ENCODE measurements at regions of chr9 and their contacts with region 1.

Region 1: DNA sequence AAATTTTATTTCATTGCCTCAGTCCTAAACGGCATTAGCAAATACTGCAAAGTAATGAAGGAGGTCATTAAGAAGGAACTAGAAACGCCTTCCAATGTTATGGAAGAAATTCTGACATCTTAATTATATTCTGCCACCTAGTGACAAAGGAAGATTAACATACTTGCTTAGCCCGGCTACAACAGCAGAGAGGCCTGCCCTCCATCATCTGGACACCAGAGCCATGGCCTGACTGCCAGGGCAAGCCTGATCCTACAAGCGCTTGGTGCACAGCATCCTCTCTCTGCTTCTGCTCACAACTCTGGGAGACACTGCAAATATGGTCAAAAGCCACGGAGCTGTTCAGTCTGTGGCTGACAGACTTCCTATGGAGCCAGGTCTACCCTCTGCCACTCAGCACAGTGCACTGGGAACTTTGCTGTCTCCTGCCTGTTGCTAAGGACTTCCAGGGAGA is 87.3 kb upstream of the SLC44A1 start:
- DNase-seq: peak; percentile 31 to 88
- H3K4me3 ChIP-seq: no peak overlapping the region
- CTCF ChIP-seq: no peak
- POLR2A ChIP-seq: no peak

Region 2: GRCh38 chr9:104863180-104863883 is 293.8 kb before region 1 on chr9:
- intact Hi-C with region 1: loop called (anchors 10 kb)
- DNase-seq: no peak
- H3K4me3 ChIP-seq: no peak overlapping the region
- CTCF ChIP-seq: no peak
- POLR2A ChIP-seq: no peak

Region 3: GRCh38 chr9:104927912-104928740 is 229.0 kb before region 1 on chr9 and contains the start of gene ABCA1:
- intact Hi-C with region 1: loop called (anchors 5 kb)
- DNase-seq: peak; percentile 96 to 99
- H3K4me3 ChIP-seq: peak within 1 kb of the TSS; percentile 95
- CTCF ChIP-seq: no peak
- POLR2A ChIP-seq: peak in 1 of 2 donors; percentile 75
- total RNA-seq, gene ABCA1: 35.6 to 60.7 (median 39.8) TPM

Region 4: DNA sequence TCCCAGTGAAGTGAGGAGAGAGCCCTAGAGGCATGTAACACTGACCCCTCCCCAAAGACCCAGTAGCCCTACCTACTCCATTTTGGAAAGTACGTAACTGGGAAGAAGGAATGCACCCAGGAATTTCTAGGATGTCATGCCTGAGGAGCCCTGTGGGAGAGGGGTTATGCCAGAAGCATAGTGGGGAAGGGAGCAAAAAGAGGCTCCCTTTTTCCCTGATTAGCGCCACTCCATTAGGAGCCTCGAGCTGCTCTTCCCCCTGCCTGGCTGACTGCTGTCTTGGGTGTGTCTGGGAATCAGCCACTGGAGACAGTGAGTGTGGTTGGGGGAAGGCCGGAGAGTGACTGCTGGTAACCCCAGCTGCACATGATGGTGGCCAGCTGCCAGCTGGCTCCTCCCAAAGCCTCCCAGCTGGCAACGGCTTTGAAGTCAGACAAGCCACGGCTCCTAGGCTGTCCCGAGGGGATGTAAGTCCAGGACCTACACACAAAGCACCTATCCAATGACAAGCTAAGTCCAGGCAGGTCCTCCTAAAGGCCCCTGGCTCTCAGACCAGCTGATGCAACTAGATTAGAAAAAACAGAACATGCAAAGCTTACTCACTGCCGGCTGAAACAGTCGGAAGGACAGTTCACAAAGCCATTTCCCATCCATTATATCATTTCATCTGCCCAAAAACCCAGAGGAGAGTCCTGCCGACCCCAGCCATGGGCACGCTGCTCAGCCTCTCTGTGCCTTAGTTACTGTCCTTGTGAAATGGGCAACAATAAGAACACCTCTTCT is 92.7 kb before region 1 on chr9:
- intact Hi-C with region 1: loop called (anchors 10 kb)
- DNase-seq: peak; percentile 93 to 98
- H3K4me3 ChIP-seq: no peak overlapping the region
- CTCF ChIP-seq: peak in 1 of 3 donors; percentile 9
- POLR2A ChIP-seq: no peak

Region 5: GRCh38 chr9:105385381-105385985 is 228.3 kb after region 1 on chr9:
- intact Hi-C with region 1: no loop called
- DNase-seq: peak in 1 of 2 donors; percentile 29
- H3K4me3 ChIP-seq: no peak overlapping the region
- CTCF ChIP-seq: no peak
- POLR2A ChIP-seq: no peak

Region 6: GRCh38 chr9:105414947-105415661 is 257.9 kb after region 1 on chr9:
- intact Hi-C with region 1: loop called (anchors 10 kb)
- DNase-seq: peak in 1 of 2 donors; percentile 39
- H3K4me3 ChIP-seq: no peak overlapping the region
- CTCF ChIP-seq: peak in 1 of 3 donors; percentile 80
- POLR2A ChIP-seq: no peak

Measured in lower leg skin (tissue), 4 donors.